ENCODE measurements at regions of chr1 and their contacts with region 1.

Region 1: GRCh38 chr1:64242895-64243756 is 39.7 kb downstream of the UBE2U start:
- DNase-seq: peak; percentile 58
- ATAC-seq: peak; percentile 55; the same call in 1 of the 2 replicates
- H3K4me3 ChIP-seq: no peak overlapping the region
- H3K27ac ChIP-seq: no peak overlapping the region
- H3K4me1 ChIP-seq: no peaks in the 10 kb centered on the region
- H3K27me3 ChIP-seq: peaks cover 2% of the 10 kb centered on the region
- CTCF ChIP-seq: peak; percentile 64
- POLR2A ChIP-seq: no peak
- RAD21 ChIP-seq: peak; percentile 82

Region 2: GRCh38 chr1:63557365-63557987 is 685.6 kb before region 1 on chr1:
- CTCF ChIA-PET with region 1: no interaction called
- POLR2A ChIA-PET with region 1: no interaction called
- dilution Hi-C with region 1: no loop called
- in situ Hi-C with region 1: no loop called
- intact Hi-C with region 1: loop called (anchors 1 kb)
- DNase-seq: peak; percentile 67
- ATAC-seq: peak; percentile 94
- H3K4me3 ChIP-seq: no peak overlapping the region
- H3K27ac ChIP-seq: peak overlapping the region; percentile 65; the same call in 1 of the 2 replicates
- H3K4me1 ChIP-seq: peaks cover 5% of the 10 kb centered on the region; the same call in 1 of the 2 replicates
- H3K27me3 ChIP-seq: no peaks in the 10 kb centered on the region
- CTCF ChIP-seq: peak; percentile 60
- POLR2A ChIP-seq: no peak
- RAD21 ChIP-seq: peak; percentile 46

Region 3: GRCh38 chr1:63674238-63674864 is 568.8 kb before region 1 on chr1:
- CTCF ChIA-PET with region 1: interaction called, 12 read pairs
- POLR2A ChIA-PET with region 1: interaction called, 5 read pairs
- dilution Hi-C with region 1: no loop called
- in situ Hi-C with region 1: loop called (anchors 5 kb)
- intact Hi-C with region 1: loop called (anchors 1 kb)
- DNase-seq: peak; percentile 93
- ATAC-seq: peak; percentile 99
- H3K4me3 ChIP-seq: no peak overlapping the region
- H3K27ac ChIP-seq: no peak overlapping the region
- H3K4me1 ChIP-seq: no peaks in the 10 kb centered on the region
- H3K27me3 ChIP-seq: no peaks in the 10 kb centered on the region
- CTCF ChIP-seq: peak; percentile 84
- POLR2A ChIP-seq: no peak
- RAD21 ChIP-seq: peak; percentile 83

Region 4: GRCh38 chr1:63917571-63918417 is 325.3 kb before region 1 on chr1:
- CTCF ChIA-PET with region 1: interaction called, 3 read pairs
- POLR2A ChIA-PET with region 1: no interaction called
- dilution Hi-C with region 1: no loop called
- in situ Hi-C with region 1: loop called (anchors 5 kb)
- intact Hi-C with region 1: loop called (anchors 2 kb)
- DNase-seq: peak; percentile 21
- ATAC-seq: no peak
- H3K4me3 ChIP-seq: no peak overlapping the region
- H3K27ac ChIP-seq: no peak overlapping the region
- H3K4me1 ChIP-seq: peaks cover 13% of the 10 kb centered on the region
- H3K27me3 ChIP-seq: no peaks in the 10 kb centered on the region
- CTCF ChIP-seq: peak; percentile 17; the same call in 1 of the 2 replicates
- POLR2A ChIP-seq: no peak
- RAD21 ChIP-seq: no peak

Region 5: DNA sequence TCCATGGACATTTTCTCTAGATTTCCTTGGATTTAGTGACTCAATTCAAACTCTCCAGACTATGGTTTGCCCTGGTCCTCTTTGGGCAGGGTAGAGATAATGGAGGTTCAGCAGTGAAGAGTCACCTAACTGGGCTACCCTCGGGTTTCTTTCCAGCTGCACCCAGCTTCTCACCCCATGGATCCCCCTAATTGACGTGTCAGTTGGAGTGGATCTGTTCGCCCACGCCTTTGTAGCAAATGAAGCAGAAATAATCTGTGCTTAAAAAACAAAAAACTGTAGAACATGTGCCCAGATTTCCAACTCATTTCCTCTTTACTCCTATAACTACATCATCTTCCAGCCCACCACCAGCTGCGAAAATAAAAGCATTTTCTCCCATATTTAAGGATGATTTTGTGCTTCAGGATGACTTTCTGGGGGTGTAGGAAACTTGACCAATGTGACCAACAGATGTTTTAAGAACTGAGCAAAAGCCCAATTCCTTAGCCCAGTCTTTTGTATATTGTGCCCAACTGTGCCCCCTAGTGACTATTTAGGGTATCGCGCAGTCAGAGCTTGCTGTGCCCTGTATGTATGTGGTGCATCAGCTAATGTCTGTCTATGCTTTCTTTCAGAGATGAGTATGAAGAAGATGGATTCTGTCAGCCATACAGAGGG is 106.2 kb before region 1 on chr1:
- CTCF ChIA-PET with region 1: interaction called, 5 read pairs
- POLR2A ChIA-PET with region 1: no interaction called
- dilution Hi-C with region 1: no loop called
- in situ Hi-C with region 1: no loop called
- intact Hi-C with region 1: loop called (anchors 2 kb)
- DNase-seq: peak; percentile 94
- ATAC-seq: peak; percentile 79
- H3K4me3 ChIP-seq: no peak overlapping the region
- H3K27ac ChIP-seq: no peak overlapping the region
- H3K4me1 ChIP-seq: peaks cover 7% of the 10 kb centered on the region; the same call in 1 of the 2 replicates
- H3K27me3 ChIP-seq: no peaks in the 10 kb centered on the region
- CTCF ChIP-seq: peak; percentile 90
- POLR2A ChIP-seq: no peak
- RAD21 ChIP-seq: peak; percentile 90